Posterior cingulate gyrus (tissue), 11 donors: ENCODE measurements at regions of chr17 and their contacts with region 1.

Region 1: DNA sequence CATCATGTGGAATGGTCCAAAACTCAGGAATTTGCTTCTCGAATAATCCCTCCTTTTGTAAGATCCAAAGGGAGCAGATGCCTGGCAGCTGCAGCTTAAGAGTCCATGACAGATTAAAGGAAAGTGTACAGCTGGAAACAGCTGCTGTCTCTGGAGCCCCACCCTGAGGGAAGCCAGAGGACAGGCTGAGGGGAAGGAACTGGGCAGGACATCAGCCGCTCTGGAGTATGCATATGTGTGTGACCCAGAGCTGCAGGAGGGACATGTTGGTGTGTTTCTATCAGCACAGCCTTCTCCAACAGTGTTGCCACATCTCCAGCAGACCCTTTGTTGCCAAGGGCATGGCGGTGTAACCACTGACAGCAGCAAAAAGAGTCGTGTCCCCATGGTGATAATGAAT is 46.2 kb downstream of the CYB561 start:
- DNase-seq: no peak

Region 2: GRCh38 chr17:62989501-62989900 is 410.4 kb before region 1 on chr17:
- intact Hi-C with region 1: loop called (anchors 2 kb)
- DNase-seq: no peak

Region 3: GRCh38 chr17:63349478-63350000 is 50.3 kb before region 1 on chr17:
- intact Hi-C with region 1: loop called (anchors 10 kb)
- DNase-seq: no peak

Region 4: GRCh38 chr17:63445979-63446691 is 46.3 kb after region 1 on chr17 and contains the start of gene CYB561:
- intact Hi-C with region 1: no loop called
- DNase-seq: peak in 9 of 10 donors; percentile 36 to 95 (median 66)